Sigmoid colon (tissue), 7 donors: ENCODE measurements at regions of chr11 and their contacts with region 1.

Region 1: GRCh38 chr11:57741132-57742086 is at the start of gene SELENOH:
- DNase-seq: peak; percentile 99
- H3K4me3 ChIP-seq: peak within 1 kb of the TSS; percentile 75 to 90 (median 88)
- H3K27ac ChIP-seq: peak within 1 kb of the TSS; percentile 93 to 97 (median 96)
- H3K4me1 ChIP-seq: peaks cover 0 to 21% (median 17%) of the 10 kb centered on the region in 4 donors
- H3K27me3 ChIP-seq: no peaks in the 10 kb centered on the region
- CTCF ChIP-seq: no peak
- EP300 ChIP-seq: peak in 1 of 4 donors; percentile 21
- POLR2A ChIP-seq: peak; percentile 70 to 85
- total RNA-seq, gene SELENOH: 130 to 188 (median 132) TPM

Region 2: DNA sequence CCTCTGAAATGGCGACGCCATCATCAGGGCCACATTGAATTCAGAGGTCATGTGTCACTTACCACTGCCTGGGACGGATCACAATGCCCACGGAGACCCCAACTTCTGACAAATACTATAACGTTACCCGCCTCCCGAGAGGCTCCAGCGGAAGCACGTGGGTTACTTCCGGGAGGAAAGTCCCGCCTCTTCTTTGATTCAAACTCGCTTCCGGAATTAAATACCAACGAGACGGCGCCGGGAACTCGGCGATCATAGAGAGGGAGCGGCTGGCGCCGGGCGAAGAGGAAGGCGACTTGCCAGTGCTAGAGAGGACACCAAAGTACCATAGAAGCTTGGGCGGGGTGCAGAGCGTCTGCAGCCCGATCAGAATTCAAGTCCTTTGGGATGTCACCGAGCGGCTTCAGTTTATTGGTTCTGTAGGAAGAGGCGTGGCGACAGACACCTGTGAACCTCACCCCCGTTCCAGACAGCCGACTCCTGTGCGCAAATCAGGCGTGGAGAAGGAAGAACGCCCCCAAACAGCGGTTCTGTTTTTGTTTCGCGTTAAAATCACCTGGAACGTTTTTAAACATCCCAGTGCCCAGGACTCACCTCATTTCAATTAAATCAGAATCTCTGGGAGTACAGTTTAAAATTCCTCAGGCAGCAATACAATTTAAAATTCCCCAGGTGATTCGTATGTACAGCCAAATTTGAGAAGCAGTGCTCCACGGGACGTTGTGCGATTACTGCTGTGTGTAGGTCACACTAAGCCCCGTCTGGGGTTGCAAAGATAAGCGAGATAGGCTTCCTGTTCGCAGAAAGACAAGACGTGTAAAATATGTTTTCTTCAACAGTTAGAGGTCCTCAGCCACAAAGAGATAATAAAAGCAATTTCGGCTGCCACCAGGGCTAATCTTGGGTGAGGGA is 210.6 kb before region 1 on chr11 and contains the start of gene TIMM10:
- intact Hi-C with region 1: no loop called
- DNase-seq: peak; percentile 98
- H3K4me3 ChIP-seq: peak within 1 kb of the TSS; percentile 55 to 78 (median 60)
- H3K27ac ChIP-seq: peak within 1 kb of the TSS; percentile 61 to 78 (median 70)
- H3K4me1 ChIP-seq: peaks cover 0 to 18% (median 11%) of the 10 kb centered on the region in 4 donors
- H3K27me3 ChIP-seq: no peaks in the 10 kb centered on the region
- CTCF ChIP-seq: no peak
- EP300 ChIP-seq: no peak
- POLR2A ChIP-seq: peak in 1 of 2 donors; percentile 37
- total RNA-seq, gene TIMM10: 22.4 to 59.7 (median 33.0) TPM

Region 3: GRCh38 chr11:57712256-57713150 is 28.9 kb before region 1 on chr11 and contains the start of gene TMX2:
- intact Hi-C with region 1: loop called (anchors 2 kb)
- DNase-seq: peak; percentile 97
- H3K4me3 ChIP-seq: peak within 1 kb of the TSS; percentile 96 to 98 (median 96)
- H3K27ac ChIP-seq: peak within 1 kb of the TSS; percentile 89 to 97 (median 92)
- H3K4me1 ChIP-seq: peaks cover 0 to 42% (median 36%) of the 10 kb centered on the region in 4 donors
- H3K27me3 ChIP-seq: no peaks in the 10 kb centered on the region
- CTCF ChIP-seq: no peak
- EP300 ChIP-seq: no peak
- POLR2A ChIP-seq: peak; percentile 23 to 34
- total RNA-seq, gene TMX2: 29.1 to 47.8 (median 40.7) TPM